Activated CD4-positive, alpha-beta T cell treated with anti-CD3 and anti-CD28 coated beads for 36 hours (primary cell): ENCODE measurements at regions of chr3 and their contacts with region 1.

Region 1: GRCh38 chr3:123559040-123559861 is 25.6 kb downstream of the HACD2 start:
- DNase-seq: no peak
- ATAC-seq: peak; percentile 38
- H3K4me3 Mint-ChIP-seq: no peak overlapping the region
- H3K27ac Mint-ChIP-seq: no peak overlapping the region
- H3K4me1 Mint-ChIP-seq: peaks cover 18% of the 10 kb centered on the region
- H3K27me3 Mint-ChIP-seq: no peaks in the 10 kb centered on the region

Region 2: DNA sequence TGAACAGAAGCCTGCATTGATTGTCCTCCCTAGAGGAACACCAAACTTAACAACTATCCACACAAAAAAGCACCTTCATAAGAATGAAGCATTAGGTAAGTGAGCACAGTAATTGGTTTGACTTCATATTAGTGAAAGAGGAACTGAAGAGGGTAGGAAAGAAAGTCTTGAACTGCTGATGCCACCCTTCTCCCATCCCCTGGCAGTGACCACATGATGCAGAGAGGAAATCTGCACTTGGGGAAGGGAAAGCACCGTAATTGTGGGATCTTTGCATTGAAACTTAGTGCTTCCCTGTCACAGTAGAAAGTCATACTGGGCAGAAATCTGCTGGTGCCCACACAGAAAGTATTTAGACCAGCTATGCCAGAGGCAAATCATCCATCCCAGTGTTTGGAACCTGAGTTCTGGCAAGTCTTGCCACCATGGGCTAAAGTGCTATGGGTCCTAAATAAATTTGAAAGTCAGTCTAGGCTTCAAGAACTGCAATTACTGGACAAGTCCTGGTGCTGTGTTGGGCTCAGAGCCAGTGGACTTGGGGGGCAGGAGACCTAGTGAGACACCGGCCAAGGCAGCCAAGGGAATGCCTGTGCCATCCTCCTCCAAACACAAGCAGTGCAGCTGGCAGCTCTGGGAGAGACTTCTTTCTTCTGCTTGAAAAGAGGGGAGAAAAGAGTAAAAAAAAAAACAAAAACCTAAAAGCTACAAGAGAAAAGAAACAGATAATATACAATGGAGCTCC is 1601.4 kb before region 1 on chr3:
- CTCF ChIA-PET with region 1: no interaction called
- POLR2A ChIA-PET with region 1: no interaction called
- intact Hi-C with region 1: no loop called
- DNase-seq: no peak
- ATAC-seq: no peak
- H3K4me3 Mint-ChIP-seq: no peak overlapping the region
- H3K27ac Mint-ChIP-seq: no peak overlapping the region
- H3K4me1 Mint-ChIP-seq: no peaks in the 10 kb centered on the region
- H3K27me3 Mint-ChIP-seq: no peaks in the 10 kb centered on the region

Region 3: GRCh38 chr3:122942937-122943827 is 616.1 kb before region 1 on chr3:
- CTCF ChIA-PET with region 1: no interaction called
- POLR2A ChIA-PET with region 1: no interaction called
- intact Hi-C with region 1: loop called in 1 of 2 experiments (anchors 2 kb)
- DNase-seq: peak; percentile 69
- ATAC-seq: peak; percentile 72
- H3K4me3 Mint-ChIP-seq: no peak overlapping the region
- H3K27ac Mint-ChIP-seq: no peak overlapping the region
- H3K4me1 Mint-ChIP-seq: no peaks in the 10 kb centered on the region
- H3K27me3 Mint-ChIP-seq: peaks cover 6% of the 10 kb centered on the region

Region 4: DNA sequence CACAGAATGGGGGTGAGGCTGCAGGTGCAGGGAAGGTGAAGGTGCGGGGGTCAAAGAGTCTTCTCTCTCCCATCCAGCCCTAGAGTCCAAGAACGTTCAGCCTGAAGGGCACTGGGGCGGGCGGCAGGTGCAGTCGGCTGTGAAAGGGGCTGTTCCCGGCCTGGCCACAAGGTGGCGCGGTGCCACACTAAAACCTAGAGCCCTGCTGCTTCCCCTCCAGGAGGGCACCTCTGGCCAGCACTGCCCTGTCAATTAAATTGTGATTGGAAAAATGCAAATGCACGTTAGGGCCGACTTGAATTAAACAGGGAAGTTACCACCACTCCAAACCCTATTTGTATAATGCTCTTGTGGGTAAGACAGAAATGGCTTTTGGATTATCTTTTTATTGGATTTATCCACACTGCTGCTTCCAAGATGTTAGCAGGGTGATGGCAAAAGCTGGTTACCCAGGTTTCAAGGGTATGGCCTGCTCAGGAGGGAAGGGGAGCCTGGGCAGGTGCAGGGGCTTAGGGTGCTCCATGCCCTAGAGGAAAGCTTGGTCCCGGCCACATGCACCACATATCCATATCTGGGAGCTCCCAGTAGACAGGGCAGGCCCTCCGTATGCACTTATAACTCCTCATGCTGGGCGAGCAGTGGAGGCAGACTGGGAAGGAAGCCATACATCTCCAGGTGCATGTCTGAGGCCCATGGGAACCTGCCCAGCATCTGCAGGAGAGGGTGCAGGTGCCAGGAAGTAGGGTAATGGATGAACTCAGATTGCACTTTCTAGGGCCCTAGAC is 230.2 kb before region 1 on chr3:
- CTCF ChIA-PET with region 1: interaction called, 42 read pairs
- POLR2A ChIA-PET with region 1: no interaction called
- intact Hi-C with region 1: loop called (anchors 1 kb)
- DNase-seq: peak; percentile 86
- ATAC-seq: peak; percentile 90
- H3K4me3 Mint-ChIP-seq: no peak overlapping the region
- H3K27ac Mint-ChIP-seq: no peak overlapping the region
- H3K4me1 Mint-ChIP-seq: no peaks in the 10 kb centered on the region
- H3K27me3 Mint-ChIP-seq: peaks cover 3% of the 10 kb centered on the region

Region 5: GRCh38 chr3:123449102-123449996 is 109.9 kb before region 1 on chr3:
- CTCF ChIA-PET with region 1: interaction called, 16 read pairs
- POLR2A ChIA-PET with region 1: no interaction called
- intact Hi-C with region 1: loop called (anchors 1 to 5 kb)
- DNase-seq: peak; percentile 35
- ATAC-seq: peak; percentile 25
- H3K4me3 Mint-ChIP-seq: no peak overlapping the region
- H3K27ac Mint-ChIP-seq: no peak overlapping the region
- H3K4me1 Mint-ChIP-seq: no peaks in the 10 kb centered on the region
- H3K27me3 Mint-ChIP-seq: peaks cover 42% of the 10 kb centered on the region

Region 6: GRCh38 chr3:123489400-123490004 is 69.7 kb before region 1 on chr3:
- CTCF ChIA-PET with region 1: interaction called, 17 read pairs
- POLR2A ChIA-PET with region 1: no interaction called
- intact Hi-C with region 1: loop called in 1 of 2 experiments (anchors 2 kb)
- DNase-seq: peak; percentile 72
- ATAC-seq: peak; percentile 69
- H3K4me3 Mint-ChIP-seq: no peak overlapping the region
- H3K27ac Mint-ChIP-seq: no peak overlapping the region
- H3K4me1 Mint-ChIP-seq: no peaks in the 10 kb centered on the region
- H3K27me3 Mint-ChIP-seq: no peaks in the 10 kb centered on the region

Region 7: DNA sequence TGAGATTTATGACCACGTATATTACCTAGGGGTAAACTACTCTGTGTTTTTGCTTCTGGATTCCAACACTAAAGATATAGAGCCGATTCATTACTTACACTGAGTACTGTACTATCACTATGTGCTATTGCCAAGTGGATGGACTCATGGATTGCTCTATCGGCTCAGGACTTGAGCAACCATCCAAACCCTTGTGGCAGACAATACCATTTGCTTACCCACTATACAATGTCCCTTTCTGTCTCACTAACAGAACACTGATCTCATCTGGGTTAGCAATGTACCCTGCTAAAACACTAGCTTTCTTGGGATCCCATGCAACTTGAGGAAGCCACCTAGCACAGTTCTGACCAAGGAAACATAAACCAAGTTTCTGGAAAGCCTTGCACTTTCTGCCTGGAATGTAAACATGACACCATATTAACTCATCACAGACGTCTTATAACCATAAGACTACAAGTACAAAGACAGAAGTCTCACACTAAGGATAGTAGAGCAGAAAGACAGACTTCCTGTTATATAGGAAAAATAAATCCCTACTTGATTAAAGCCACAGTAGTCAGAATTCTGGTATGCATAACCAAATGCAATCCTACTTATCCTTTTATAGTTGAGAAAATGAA is 13.0 kb before region 1 on chr3:
- CTCF ChIA-PET with region 1: interaction called, 17 read pairs
- POLR2A ChIA-PET with region 1: no interaction called
- intact Hi-C with region 1: no loop called
- DNase-seq: no peak
- ATAC-seq: no peak
- H3K4me3 Mint-ChIP-seq: no peak overlapping the region
- H3K27ac Mint-ChIP-seq: no peak overlapping the region
- H3K4me1 Mint-ChIP-seq: peaks cover 7% of the 10 kb centered on the region
- H3K27me3 Mint-ChIP-seq: no peaks in the 10 kb centered on the region

Region 8: DNA sequence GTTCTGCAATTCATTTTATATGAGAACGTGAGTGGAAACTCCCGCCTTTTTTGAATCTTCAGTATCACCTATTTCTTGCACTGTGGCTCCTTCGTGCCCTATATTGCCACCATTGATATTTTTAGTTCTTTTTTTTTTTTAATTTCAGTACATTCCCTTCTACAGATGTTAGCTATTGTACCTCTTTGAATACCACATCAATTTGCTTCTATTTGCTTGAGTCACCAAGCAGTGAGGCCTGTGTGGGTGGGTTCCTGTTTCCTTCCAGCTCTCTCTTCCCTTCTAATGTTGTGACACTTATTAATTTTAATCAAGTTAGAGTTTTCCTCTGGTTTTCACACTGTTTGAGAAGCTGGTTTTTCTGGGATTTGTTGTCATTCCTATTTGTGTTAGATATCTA is 16.9 kb after region 1 on chr3:
- CTCF ChIA-PET with region 1: interaction called, 22 read pairs
- POLR2A ChIA-PET with region 1: no interaction called
- intact Hi-C with region 1: no loop called
- DNase-seq: peak; percentile 58
- ATAC-seq: peak; percentile 72
- H3K4me3 Mint-ChIP-seq: no peak overlapping the region
- H3K27ac Mint-ChIP-seq: peak overlapping the region; percentile 43
- H3K4me1 Mint-ChIP-seq: peaks cover 34% of the 10 kb centered on the region
- H3K27me3 Mint-ChIP-seq: no peaks in the 10 kb centered on the region